ENCODE measurements at regions of chr21 and their contacts with region 1.

Region 1: GRCh38 chr21:34202553-34203372 is 129.4 kb downstream of the MRPS6 start:
- DNase-seq: peak; percentile 45 to 70
- ATAC-seq: peak in 3 of 4 donors; percentile 10 to 21 (median 19)
- H3K4me3 ChIP-seq: peak overlapping the region; percentile 16
- H3K27ac ChIP-seq: no peak overlapping the region
- H3K4me1 ChIP-seq: peaks cover 14% of the 10 kb centered on the region
- H3K27me3 ChIP-seq: no peaks in the 10 kb centered on the region
- CTCF ChIP-seq: no peak

Region 2: DNA sequence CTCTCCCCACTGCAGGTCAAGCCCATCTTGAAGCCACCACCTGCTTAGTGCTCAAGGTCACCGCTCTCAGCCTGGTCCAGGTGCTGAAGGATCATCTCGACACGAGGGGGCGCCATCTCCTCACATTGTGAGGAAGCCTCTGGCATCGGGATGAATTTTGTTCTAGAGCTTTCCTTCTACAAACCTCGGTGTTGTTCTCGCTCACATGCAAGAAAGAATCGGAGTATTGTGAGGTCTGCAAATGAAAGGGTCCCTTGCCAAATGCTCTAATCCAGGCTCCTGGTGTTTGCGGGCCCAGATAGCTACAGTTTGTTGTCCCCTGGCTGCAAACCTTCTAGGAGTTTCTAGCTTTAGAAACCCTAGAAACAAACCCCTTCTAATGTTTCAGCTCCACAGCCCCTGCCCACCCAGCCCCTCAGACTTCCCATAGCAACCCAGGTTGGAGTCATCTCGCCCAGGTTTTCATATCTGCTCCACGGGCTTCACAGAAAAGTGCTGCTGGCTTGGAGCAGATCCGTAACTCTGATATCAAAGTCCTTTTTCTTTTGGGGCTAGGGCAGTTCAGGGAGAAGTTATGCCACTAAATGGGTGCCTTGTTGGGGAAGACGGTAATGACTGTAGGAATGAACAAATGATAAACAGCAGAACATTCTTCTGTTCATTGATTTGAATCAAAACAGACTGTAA is 278.5 kb before region 1 on chr21:
- intact Hi-C with region 1: loop called in 1 of 2 experiments (anchors 5 kb)
- DNase-seq: peak; percentile 88 to 93
- ATAC-seq: peak; percentile 97 to 100 (median 98)
- H3K4me3 ChIP-seq: no peak overlapping the region
- H3K27ac ChIP-seq: no peak overlapping the region
- H3K4me1 ChIP-seq: no peaks in the 10 kb centered on the region
- H3K27me3 ChIP-seq: no peaks in the 10 kb centered on the region
- CTCF ChIP-seq: peak; percentile 92

Region 3: DNA sequence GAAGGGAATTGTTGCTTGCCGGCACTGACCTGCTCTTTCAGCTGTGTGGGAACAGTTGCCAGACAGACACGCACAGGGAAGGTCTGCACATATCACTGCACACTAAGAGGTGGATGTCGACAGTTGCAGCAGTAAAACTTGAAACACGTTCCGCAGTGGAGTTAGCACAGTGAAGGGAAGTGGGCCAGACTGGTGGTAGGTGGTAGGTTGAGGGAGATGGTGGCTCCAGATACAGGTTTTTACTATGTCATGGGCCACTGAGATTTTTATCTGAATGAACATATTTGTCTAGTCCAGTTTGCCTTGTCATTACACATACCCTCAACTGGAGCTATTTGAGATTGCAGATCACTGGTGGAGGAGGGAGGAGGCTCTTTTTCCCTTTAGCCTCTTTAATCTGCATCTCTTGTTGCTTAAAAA is 115.9 kb before region 1 on chr21:
- intact Hi-C with region 1: loop called in 1 of 2 experiments (anchors 10 kb)
- DNase-seq: no peak
- ATAC-seq: peak; percentile 54 to 74 (median 65)
- H3K4me3 ChIP-seq: no peak overlapping the region
- H3K27ac ChIP-seq: no peak overlapping the region
- H3K4me1 ChIP-seq: peaks cover 30% of the 10 kb centered on the region
- H3K27me3 ChIP-seq: no peaks in the 10 kb centered on the region
- CTCF ChIP-seq: no peak

Region 4: GRCh38 chr21:34129039-34129891 is 73.5 kb before region 1 on chr21:
- intact Hi-C with region 1: loop called in 1 of 2 experiments (anchors 5 kb)
- DNase-seq: peak; percentile 55 to 67
- ATAC-seq: peak; percentile 75 to 83 (median 79)
- H3K4me3 ChIP-seq: peak overlapping the region; percentile 50
- H3K27ac ChIP-seq: peak overlapping the region; percentile 85
- H3K4me1 ChIP-seq: peaks cover 69% of the 10 kb centered on the region
- H3K27me3 ChIP-seq: no peaks in the 10 kb centered on the region
- CTCF ChIP-seq: peak; percentile 39

Region 5: GRCh38 chr21:34157521-34157920 is 45.2 kb before region 1 on chr21:
- intact Hi-C with region 1: no loop called
- DNase-seq: no peak
- ATAC-seq: no peak
- H3K4me3 ChIP-seq: no peak overlapping the region
- H3K27ac ChIP-seq: no peak overlapping the region
- H3K4me1 ChIP-seq: no peaks in the 10 kb centered on the region
- H3K27me3 ChIP-seq: no peaks in the 10 kb centered on the region
- CTCF ChIP-seq: no peak

Region 6: GRCh38 chr21:34367321-34367935 is 164.7 kb after region 1 on chr21:
- intact Hi-C with region 1: no loop called
- DNase-seq: no peak
- ATAC-seq: peak in 3 of 4 donors; percentile 37 to 73 (median 67)
- H3K4me3 ChIP-seq: no peak overlapping the region
- H3K27ac ChIP-seq: no peak overlapping the region
- H3K4me1 ChIP-seq: no peaks in the 10 kb centered on the region
- H3K27me3 ChIP-seq: no peaks in the 10 kb centered on the region
- CTCF ChIP-seq: peak; percentile 64